ENCODE measurements at regions of chr16 and their contacts with region 1.

Region 1: GRCh38 chr16:57092786-57093411 is 516 bp downstream of the CPNE2 start:
- DNase-seq: peak; percentile 11
- ATAC-seq: peak; percentile 48
- H3K4me3 ChIP-seq: peak overlapping the region; percentile 67
- H3K27ac ChIP-seq: no peak overlapping the region
- H3K4me1 ChIP-seq: peaks cover 6% of the 10 kb centered on the region
- H3K27me3 ChIP-seq: no peaks in the 10 kb centered on the region
- CTCF ChIP-seq: peak; percentile 52

Region 2: DNA sequence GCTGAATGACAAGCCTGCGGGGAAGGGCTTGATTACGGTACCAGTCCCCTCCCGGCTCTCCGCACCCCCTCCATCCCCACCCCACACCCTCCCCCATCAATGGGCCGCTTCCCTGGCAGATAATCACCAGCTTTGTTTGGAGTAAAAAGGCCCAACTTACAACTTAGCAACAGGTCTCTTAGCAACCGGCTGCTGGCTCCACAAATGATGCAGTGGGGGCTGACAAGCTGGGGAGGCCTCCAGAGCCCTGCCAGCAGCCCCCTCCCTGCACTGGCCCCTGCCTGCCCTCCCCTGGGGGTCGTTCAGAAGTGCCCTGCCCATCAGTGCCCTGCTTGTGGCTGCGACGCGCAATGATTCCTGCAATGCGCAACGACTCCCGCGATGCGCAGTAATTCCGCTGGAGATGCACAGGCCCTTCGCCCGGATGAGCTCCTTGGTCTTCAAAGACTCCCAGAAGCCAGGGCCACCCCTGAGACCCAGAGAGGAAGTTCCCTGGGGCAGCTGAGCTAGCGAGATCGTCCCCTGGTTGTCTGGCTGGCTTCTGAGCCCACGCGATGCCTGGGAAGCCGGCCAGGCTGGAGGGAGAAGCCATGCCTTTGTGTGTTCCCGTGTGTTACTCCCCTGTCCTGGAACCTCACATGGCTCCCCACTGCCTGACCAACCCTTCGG is 22.7 kb after region 1 on chr16:
- CTCF ChIA-PET with region 1: interaction called, 10 read pairs
- POLR2A ChIA-PET with region 1: no interaction called
- intact Hi-C with region 1: no loop called
- DNase-seq: no peak
- ATAC-seq: no peak
- H3K4me3 ChIP-seq: no peak overlapping the region
- H3K27ac ChIP-seq: no peak overlapping the region
- H3K4me1 ChIP-seq: no peaks in the 10 kb centered on the region
- H3K27me3 ChIP-seq: no peaks in the 10 kb centered on the region
- CTCF ChIP-seq: no peak

Region 3: GRCh38 chr16:57335366-57335765 is 242.5 kb after region 1 on chr16:
- CTCF ChIA-PET with region 1: interaction called, 12 read pairs
- POLR2A ChIA-PET with region 1: no interaction called
- intact Hi-C with region 1: no loop called
- DNase-seq: no peak
- ATAC-seq: no peak
- H3K4me3 ChIP-seq: no peak overlapping the region
- H3K27ac ChIP-seq: no peak overlapping the region
- H3K4me1 ChIP-seq: peaks cover 13% of the 10 kb centered on the region
- H3K27me3 ChIP-seq: no peaks in the 10 kb centered on the region
- CTCF ChIP-seq: no peak